ENCODE measurements at regions of chr4 and their contacts with region 1.

Region 1: GRCh38 chr4:147590249-147590920 is 26.8 kb upstream of the TMEM184C start:
- DNase-seq: peak in 4 of 5 donors; percentile 6 to 22 (median 14)
- H3K4me3 ChIP-seq: no peak overlapping the region
- H3K4me3 Mint-ChIP-seq: no peak overlapping the region
- H3K27ac ChIP-seq: no peak overlapping the region
- H3K27ac Mint-ChIP-seq: peak overlapping the region in 1 of 7 donors; percentile 10
- H3K4me1 ChIP-seq: no peaks in the 10 kb centered on the region
- H3K4me1 Mint-ChIP-seq: peaks cover 0 to 4% (median 3%) of the 10 kb centered on the region in 4 donors
- H3K27me3 ChIP-seq: no peaks in the 10 kb centered on the region
- H3K27me3 Mint-ChIP-seq: peaks cover 2 to 3% of the 10 kb centered on the region in 2 donors

Region 2: DNA sequence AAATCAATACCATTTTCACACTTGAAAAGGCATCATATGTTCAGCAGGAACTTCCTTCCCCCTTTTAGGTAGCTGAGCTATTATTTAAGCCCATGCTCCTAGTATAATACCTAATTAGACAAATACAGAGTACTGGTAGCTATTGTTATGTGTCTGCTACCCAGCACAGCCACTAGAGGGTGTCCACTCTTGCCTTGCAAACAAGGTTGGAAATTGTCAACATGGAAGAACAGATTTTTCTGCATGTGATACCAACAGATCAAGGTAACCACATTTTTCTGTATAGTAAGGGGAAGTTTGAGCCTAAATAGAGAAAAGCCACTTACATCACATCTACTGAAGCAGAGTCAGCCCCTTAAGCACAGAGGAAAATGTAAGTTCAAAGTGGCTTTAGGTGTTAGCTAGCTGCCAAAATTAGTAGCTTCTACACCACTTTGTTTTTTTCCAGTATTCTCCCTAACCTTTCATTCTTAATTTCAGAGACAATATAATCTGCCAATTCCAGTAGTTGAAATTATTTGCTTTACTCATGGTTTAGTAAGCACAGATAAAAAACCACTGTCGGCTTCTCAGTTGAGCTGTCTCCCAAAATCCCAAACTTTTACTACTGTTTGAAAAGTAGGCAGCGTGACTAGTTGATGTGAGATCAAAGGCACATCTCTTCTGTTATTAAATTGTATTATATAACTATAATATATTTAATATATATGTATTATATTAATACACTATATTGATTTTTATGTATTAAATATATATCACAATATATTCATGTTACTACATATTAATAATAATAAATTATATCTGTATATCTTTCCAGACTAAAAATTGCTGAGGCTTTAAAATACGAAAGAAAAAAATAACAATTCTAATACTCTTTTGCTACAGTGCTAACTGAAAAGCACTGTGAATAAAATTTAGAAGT is 71.3 kb before region 1 on chr4:
- CTCF ChIA-PET with region 1: interaction called, 15 read pairs
- POLR2A ChIA-PET with region 1: no interaction called
- intact Hi-C with region 1: loop called (anchors 1 kb)
- DNase-seq: peak; percentile 32 to 47 (median 34)
- H3K4me3 ChIP-seq: no peak overlapping the region
- H3K4me3 Mint-ChIP-seq: no peak overlapping the region
- H3K27ac ChIP-seq: no peak overlapping the region
- H3K27ac Mint-ChIP-seq: no peak overlapping the region
- H3K4me1 ChIP-seq: no peaks in the 10 kb centered on the region
- H3K4me1 Mint-ChIP-seq: peaks cover 0 to 2% (median under 1%) of the 10 kb centered on the region in 4 donors
- H3K27me3 ChIP-seq: no peaks in the 10 kb centered on the region
- H3K27me3 Mint-ChIP-seq: peaks cover 2 to 8% of the 10 kb centered on the region in 2 donors

Region 3: DNA sequence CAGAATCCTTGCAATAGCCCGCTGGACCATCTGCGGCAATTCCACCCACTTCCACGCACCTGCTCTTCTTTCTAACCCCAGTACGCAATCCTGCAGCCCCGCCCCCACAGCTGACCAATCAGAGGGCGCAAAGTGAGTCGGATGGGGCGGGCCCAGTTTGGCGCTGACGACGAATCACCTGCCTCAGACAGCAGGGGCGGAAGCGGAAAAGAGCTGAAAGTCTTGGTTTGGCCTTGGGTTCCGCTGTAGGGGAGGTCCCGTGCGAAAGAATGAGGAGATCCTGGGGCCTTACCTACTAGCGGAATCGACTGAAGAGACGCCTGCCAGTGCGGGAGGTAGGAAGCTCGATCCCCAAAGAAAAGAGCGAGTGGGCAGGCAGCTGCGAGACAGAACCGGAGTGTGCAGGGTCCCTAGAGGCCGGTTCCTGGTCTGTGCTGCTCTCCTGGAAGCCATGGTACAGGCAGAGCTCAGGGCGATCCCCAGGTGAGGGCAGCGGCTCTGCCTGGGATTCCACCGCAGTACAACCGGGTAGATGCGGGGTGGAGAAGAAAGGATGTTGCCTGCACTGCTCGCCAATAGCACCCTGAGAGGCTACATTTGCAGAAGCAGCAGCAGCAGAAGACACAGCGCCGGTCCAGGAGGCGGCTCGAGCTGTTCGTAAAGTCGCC is 26.9 kb after region 1 on chr4 and contains the start of gene TMEM184C:
- CTCF ChIA-PET with region 1: interaction called, 10 read pairs
- POLR2A ChIA-PET with region 1: no interaction called
- intact Hi-C with region 1: no loop called
- DNase-seq: peak; percentile 97 to 98 (median 98)
- H3K4me3 ChIP-seq: peak within 1 kb of the TSS; percentile 82 to 99
- H3K4me3 Mint-ChIP-seq: peak within 1 kb of the TSS; percentile 92 to 98 (median 96)
- H3K27ac ChIP-seq: peak within 1 kb of the TSS; percentile 93
- H3K27ac Mint-ChIP-seq: peak within 1 kb of the TSS; percentile 96 to 99 (median 97)
- H3K4me1 ChIP-seq: peaks cover 49% of the 10 kb centered on the region
- H3K4me1 Mint-ChIP-seq: peaks cover 22 to 51% (median 36%) of the 10 kb centered on the region in 4 donors
- H3K27me3 ChIP-seq: no peaks in the 10 kb centered on the region
- H3K27me3 Mint-ChIP-seq: peaks cover 0 to 1% of the 10 kb centered on the region in 2 donors
- total RNA-seq, gene TMEM184C: 28.8 to 31.5 TPM

Measured in CD4-positive, alpha-beta memory T cell (primary cell).